ENCODE measurements at regions of chr4 and their contacts with region 1.

Region 1: DNA sequence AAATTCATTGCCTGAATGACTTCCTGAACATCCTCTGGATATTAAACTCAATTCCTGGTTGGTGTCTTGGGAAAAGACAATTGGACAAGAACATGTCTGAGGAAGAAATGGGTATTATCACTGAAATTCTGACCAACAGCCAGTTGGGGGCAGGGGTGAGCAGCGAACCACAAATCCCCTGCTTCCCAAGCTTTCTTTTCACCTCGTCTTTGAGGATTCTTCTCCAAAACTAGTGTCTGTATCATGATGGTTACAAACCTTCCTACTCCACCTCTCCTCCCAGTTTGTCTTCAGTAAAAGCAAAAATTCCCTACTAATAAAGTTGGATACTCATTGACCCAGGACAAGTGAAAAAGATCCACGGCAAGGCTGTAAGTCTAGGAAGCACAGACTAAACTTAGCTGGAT is 48.3 kb upstream of the WDR1 start:
- DNase-seq: peak; percentile 55
- H3K4me3 ChIP-seq: peak overlapping the region in 1 of 2 experiments; percentile 34; a peak in 1 of 4 replicates
- H3K27ac ChIP-seq: no peak overlapping the region
- H3K4me1 ChIP-seq: no peaks in the 10 kb centered on the region
- H3K27me3 ChIP-seq: no peaks in the 10 kb centered on the region; the same call in 1 of the 2 replicates
- CTCF ChIP-seq: peak; percentile 70
- EP300 ChIP-seq: no peak
- RAD21 ChIP-seq: peak; percentile 64

Region 2: DNA sequence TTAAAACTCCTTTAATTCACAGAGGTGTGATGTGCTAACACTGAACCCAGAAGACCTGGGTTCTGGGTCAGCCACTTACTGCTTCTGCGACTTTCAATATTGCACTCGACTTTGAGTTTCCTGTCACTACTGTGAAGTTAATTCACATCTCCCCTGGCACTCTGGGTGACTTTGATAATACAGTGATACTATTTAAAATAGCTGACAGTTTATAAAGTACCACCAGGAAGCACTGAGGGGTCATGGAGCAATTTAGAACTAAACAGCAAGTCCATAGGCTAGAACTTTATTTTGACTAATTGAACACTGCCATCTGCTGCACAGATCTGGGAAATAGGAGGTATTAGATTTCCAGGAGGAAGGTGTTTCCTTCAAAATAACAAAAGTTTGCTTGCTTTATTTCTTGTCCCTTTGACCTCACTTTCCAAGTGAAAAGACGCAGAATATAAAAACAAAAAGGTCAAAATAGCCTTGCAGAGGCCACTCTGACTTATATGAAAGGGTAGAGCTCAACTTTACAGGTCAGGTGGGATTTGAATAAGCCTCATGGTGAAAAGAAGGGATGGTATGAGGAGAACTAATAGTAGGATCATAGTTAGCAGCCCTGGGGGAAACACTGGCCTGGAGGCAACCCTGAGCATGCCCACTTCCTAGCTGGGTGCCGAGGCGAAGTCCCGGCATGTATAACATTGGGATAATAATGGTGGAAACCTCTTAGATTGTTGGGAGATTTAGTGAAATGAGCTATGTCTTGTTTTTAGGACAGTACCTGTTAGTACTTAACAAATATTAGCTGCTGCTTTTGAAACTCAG is 239.0 kb after region 1 on chr4:
- CTCF ChIA-PET with region 1: interaction called, 16 read pairs
- POLR2A ChIA-PET with region 1: no interaction called
- DNase-seq: peak; percentile 16
- H3K4me3 ChIP-seq: no peak overlapping the region
- H3K27ac ChIP-seq: no peak overlapping the region
- H3K4me1 ChIP-seq: no peaks in the 10 kb centered on the region
- H3K27me3 ChIP-seq: no peaks in the 10 kb centered on the region
- CTCF ChIP-seq: peak; percentile 60
- EP300 ChIP-seq: no peak
- RAD21 ChIP-seq: peak; percentile 63

Region 3: DNA sequence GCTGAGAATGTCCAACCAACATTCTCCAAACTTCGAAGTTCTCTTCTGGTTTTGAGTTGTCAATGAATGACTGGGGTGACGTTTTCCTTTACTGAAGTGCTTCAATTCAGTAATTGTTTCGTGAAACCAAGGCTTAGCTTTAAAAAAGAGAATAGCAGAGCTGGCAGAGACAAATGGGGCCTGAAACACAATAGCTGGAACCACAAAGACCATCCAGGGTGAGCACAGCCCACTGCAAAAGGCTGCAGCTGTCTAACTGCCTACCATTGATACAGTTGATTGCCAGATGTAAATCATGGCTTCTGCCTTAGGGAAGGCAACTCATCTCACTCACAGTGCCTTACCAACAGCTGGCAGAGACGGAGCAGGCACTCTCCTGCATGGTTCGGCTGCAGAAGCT is 371.0 kb after region 1 on chr4:
- CTCF ChIA-PET with region 1: interaction called, 26 read pairs
- POLR2A ChIA-PET with region 1: no interaction called
- DNase-seq: no peak
- H3K4me3 ChIP-seq: no peak overlapping the region
- H3K27ac ChIP-seq: no peak overlapping the region
- H3K4me1 ChIP-seq: no peaks in the 10 kb centered on the region
- H3K27me3 ChIP-seq: no peaks in the 10 kb centered on the region; the same call in 1 of the 2 replicates
- CTCF ChIP-seq: no peak
- EP300 ChIP-seq: no peak
- RAD21 ChIP-seq: no peak

Measured in SK-N-SH (cell line).